ENCODE measurements at regions of chr2 and their contacts with region 1.

Region 1: GRCh38 chr2:169528271-169528701 is 18.8 kb downstream of the KLHL41 start:
- DNase-seq: peak; percentile 75
- H3K4me3 ChIP-seq: no peak overlapping the region
- H3K27ac ChIP-seq: no peak overlapping the region
- H3K4me1 ChIP-seq: no peaks in the 10 kb centered on the region
- CTCF ChIP-seq: peak; percentile 96

Region 2: DNA sequence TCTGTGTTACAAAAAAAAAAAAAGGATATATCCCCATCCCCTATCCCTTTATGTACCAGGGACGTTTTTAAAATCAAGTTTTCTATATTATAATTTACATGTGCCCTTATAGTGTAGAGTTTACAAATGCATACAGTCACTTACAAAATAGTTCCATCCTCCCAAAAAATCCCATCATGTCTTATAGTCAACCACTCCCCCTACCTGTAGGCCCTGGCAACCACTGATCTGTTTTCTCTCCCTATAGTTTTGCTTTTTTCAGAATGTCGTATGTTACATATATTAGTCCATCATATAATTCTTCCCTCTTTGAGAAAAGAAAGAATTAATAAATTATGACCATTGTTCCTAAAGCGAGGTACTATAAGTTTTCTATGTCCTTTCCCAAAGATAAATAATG is 148.1 kb after region 1 on chr2:
- CTCF ChIA-PET with region 1: no interaction called
- POLR2A ChIA-PET with region 1: no interaction called
- intact Hi-C with region 1: loop called (anchors 5 kb)
- DNase-seq: peak; percentile 17
- H3K4me3 ChIP-seq: no peak overlapping the region
- H3K27ac ChIP-seq: no peak overlapping the region
- H3K4me1 ChIP-seq: no peaks in the 10 kb centered on the region
- CTCF ChIP-seq: peak; percentile 75